Tibial artery (tissue), 4 donors: ENCODE measurements at regions of chr11 and their contacts with region 1.

Region 1: GRCh38 chr11:118572061-118572980 is at the start of gene ARCN1:
- DNase-seq: peak; percentile 74 to 90
- H3K4me3 ChIP-seq: peak within 1 kb of the TSS; percentile 98
- H3K27ac ChIP-seq: peak within 1 kb of the TSS; percentile 99
- H3K4me1 ChIP-seq: peaks cover 0 to 46% (median 21%) of the 10 kb centered on the region in 4 donors
- H3K27me3 ChIP-seq: no peaks in the 10 kb centered on the region
- CTCF ChIP-seq: no peak

Region 2: GRCh38 chr11:118610804-118611795 is 38.8 kb after region 1 on chr11:
- intact Hi-C with region 1: loop called (anchors 5 kb)
- DNase-seq: peak; percentile 83 to 89
- H3K4me3 ChIP-seq: peak overlapping the region; percentile 70 to 85
- H3K27ac ChIP-seq: peak overlapping the region; percentile 93
- H3K4me1 ChIP-seq: peaks cover 0 to 50% (median 42%) of the 10 kb centered on the region in 4 donors
- H3K27me3 ChIP-seq: no peaks in the 10 kb centered on the region
- CTCF ChIP-seq: peak; percentile 66 to 83

Region 3: GRCh38 chr11:118621071-118621783 is 48.9 kb after region 1 on chr11:
- intact Hi-C with region 1: no loop called
- DNase-seq: peak; percentile 92 to 98
- H3K4me3 ChIP-seq: peak overlapping the region; percentile 58 to 62
- H3K27ac ChIP-seq: peak overlapping the region; percentile 87 to 93
- H3K4me1 ChIP-seq: peaks cover 5 to 73% (median 62%) of the 10 kb centered on the region in 4 donors
- H3K27me3 ChIP-seq: no peaks in the 10 kb centered on the region
- CTCF ChIP-seq: no peak

Region 4: DNA sequence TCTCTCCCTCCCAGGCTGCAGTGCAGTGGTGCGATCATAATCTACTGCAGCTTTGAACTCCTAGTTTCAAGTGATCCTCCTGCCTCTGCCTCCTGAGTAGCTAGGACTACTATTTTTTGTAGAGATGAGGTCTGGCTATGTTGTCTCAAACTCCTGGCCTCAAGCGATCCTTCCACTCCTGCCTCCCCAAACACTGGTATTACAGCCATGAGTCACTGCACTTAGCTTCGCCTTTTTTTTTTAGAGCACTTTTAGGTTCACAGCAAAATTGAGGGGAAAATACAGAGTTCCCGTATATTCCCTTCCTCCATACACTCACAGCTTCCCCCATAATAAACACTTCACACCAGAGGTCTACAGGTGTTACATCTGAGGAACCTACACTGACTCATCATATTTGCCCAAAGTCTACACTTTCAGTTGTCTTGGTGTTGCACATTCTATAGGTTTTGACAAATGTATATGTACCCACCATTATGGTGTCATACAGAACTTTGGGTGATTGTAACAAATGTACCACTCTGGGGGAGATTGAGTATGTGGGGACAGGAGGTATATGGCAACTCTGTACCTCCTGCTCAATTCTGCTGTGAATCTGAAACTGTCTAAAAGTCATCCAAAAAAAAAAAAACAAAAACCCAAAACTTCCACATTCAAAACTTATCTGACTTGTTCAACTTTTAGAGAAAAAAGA is 469.6 kb after region 1 on chr11:
- intact Hi-C with region 1: no loop called
- DNase-seq: no peak
- H3K4me3 ChIP-seq: no peak overlapping the region
- H3K27ac ChIP-seq: no peak overlapping the region
- H3K4me1 ChIP-seq: no peaks in the 10 kb centered on the region
- H3K27me3 ChIP-seq: no peaks in the 10 kb centered on the region
- CTCF ChIP-seq: no peak

Region 5: DNA sequence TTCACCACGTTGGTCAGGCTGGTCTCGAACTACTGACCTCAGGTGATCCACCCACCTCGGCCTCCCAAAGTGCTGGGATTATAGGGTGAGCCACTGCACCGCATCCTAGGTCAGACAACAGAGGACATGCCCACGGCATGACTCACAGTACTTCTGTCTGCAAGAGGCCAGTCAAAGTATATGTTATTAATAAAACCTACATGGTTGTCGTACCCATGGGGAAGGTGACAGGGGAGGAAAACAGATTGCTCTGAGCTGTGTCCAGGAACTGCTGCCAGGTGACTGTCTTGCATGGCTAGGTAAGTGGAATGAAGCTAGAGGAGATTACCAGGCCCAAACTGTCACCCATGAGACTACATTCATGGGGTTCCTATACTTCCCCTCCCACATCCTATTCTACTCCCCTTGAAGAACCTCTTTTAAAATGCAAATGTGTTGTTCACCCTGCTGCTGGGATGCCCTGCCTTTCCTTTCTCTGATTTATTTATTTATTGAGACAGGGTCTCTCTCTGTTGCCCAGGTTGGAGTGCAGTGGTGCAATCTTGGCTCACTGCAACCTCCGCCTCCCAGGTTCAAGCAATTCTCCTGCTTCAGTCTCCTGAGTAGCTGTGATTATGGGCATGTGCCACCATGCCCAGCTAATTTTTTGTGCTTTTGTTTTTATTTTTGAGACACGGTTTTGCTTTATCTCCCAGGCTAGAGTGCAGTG is 594.2 kb after region 1 on chr11:
- intact Hi-C with region 1: no loop called
- DNase-seq: no peak
- H3K4me3 ChIP-seq: no peak overlapping the region
- H3K27ac ChIP-seq: no peak overlapping the region
- H3K4me1 ChIP-seq: peaks cover 0 to 13% (median 10%) of the 10 kb centered on the region in 4 donors
- H3K27me3 ChIP-seq: no peaks in the 10 kb centered on the region
- CTCF ChIP-seq: no peak